PC-3 (cell line): ENCODE measurements at regions of chr6 and their contacts with region 1.

Region 1: GRCh38 chr6:143136647-143137046 is 76.0 kb downstream of the AIG1 start:
- DNase-seq: no peak
- ATAC-seq: no peak
- H3K4me3 ChIP-seq: no peak overlapping the region
- H3K27ac ChIP-seq: no peak overlapping the region
- H3K4me1 ChIP-seq: no peaks in the 10 kb centered on the region
- H3K27me3 ChIP-seq: no peaks in the 10 kb centered on the region
- CTCF ChIP-seq: no peak

Region 2: DNA sequence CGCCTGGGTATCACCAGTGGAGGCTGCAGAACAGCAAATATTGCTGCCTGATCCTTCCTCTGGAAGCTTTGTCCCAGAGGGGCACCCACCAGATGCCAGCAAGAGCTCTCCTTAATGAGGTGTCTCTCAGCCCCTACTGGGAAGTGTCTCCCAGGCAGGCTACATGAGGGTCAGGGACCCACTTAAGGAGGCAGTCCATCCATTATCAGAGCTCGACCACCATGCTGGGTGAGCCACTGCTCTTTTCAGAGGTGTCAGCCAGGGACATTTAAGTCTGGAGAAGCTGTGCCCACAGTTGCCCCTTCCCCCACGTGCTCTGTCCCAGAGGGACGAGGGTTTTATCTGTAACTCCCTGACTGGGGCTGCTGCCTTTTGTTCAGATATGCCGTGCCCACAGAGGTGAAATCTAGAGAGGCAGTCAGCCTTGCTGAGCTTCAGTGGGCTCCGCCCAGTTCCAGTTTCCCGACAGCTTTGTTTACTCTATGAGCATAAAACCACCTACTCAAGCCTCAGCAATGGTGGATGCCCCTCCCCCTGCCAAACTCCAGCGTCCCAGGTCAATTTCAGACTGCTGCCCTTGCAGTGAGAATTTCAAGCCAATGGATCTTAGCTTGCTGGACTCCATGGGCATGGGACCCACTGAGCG is 101.8 kb before region 1 on chr6:
- CTCF ChIA-PET with region 1: no interaction called
- POLR2A ChIA-PET with region 1: no interaction called
- intact Hi-C with region 1: no loop called
- DNase-seq: peak; percentile 32
- ATAC-seq: no peak
- H3K4me3 ChIP-seq: no peak overlapping the region
- H3K27ac ChIP-seq: no peak overlapping the region
- H3K4me1 ChIP-seq: peaks cover 6% of the 10 kb centered on the region
- H3K27me3 ChIP-seq: no peaks in the 10 kb centered on the region
- CTCF ChIP-seq: no peak

Region 3: DNA sequence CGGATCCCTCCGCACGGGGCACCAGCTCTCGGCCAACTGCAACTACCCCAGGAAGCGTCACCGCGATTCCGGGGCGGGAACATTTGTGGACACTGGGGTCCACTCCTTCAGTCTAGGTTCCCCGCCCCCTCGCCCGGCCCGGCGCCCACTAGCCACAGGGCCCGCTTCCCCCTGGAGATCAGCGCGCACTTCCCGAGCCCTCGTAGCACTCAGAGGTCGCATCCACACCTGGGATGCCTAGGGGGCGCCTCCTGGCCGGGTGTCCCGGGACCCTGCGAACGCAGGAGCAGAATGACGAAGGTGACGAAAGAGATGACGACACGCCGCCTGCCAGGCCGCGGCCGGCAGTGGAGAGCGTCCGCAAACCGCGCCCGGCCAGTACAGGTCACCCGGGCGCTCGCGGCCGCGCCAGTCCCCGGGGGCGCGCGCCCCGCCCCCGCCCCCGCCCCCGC is 76.3 kb before region 1 on chr6:
- CTCF ChIA-PET with region 1: no interaction called
- POLR2A ChIA-PET with region 1: no interaction called
- intact Hi-C with region 1: loop called (anchors 10 kb)
- DNase-seq: peak; percentile 67
- ATAC-seq: peak; percentile 73
- H3K4me3 ChIP-seq: peak overlapping the region; percentile 90
- H3K27ac ChIP-seq: peak overlapping the region; percentile 89
- H3K4me1 ChIP-seq: peaks cover 22% of the 10 kb centered on the region
- H3K27me3 ChIP-seq: no peaks in the 10 kb centered on the region
- CTCF ChIP-seq: peak; percentile 20; the same call in 1 of the 2 replicates

Region 4: GRCh38 chr6:143215363-143215762 is 78.7 kb after region 1 on chr6:
- CTCF ChIA-PET with region 1: no interaction called
- POLR2A ChIA-PET with region 1: no interaction called
- intact Hi-C with region 1: no loop called
- DNase-seq: peak; percentile 49
- ATAC-seq: peak; percentile 86
- H3K4me3 ChIP-seq: no peak overlapping the region
- H3K27ac ChIP-seq: no peak overlapping the region
- H3K4me1 ChIP-seq: peaks cover 12% of the 10 kb centered on the region
- H3K27me3 ChIP-seq: no peaks in the 10 kb centered on the region
- CTCF ChIP-seq: no peak